Mammary epithelial cell (primary cell): ENCODE measurements at regions of chr4 and their contacts with region 1.

Region 1: DNA sequence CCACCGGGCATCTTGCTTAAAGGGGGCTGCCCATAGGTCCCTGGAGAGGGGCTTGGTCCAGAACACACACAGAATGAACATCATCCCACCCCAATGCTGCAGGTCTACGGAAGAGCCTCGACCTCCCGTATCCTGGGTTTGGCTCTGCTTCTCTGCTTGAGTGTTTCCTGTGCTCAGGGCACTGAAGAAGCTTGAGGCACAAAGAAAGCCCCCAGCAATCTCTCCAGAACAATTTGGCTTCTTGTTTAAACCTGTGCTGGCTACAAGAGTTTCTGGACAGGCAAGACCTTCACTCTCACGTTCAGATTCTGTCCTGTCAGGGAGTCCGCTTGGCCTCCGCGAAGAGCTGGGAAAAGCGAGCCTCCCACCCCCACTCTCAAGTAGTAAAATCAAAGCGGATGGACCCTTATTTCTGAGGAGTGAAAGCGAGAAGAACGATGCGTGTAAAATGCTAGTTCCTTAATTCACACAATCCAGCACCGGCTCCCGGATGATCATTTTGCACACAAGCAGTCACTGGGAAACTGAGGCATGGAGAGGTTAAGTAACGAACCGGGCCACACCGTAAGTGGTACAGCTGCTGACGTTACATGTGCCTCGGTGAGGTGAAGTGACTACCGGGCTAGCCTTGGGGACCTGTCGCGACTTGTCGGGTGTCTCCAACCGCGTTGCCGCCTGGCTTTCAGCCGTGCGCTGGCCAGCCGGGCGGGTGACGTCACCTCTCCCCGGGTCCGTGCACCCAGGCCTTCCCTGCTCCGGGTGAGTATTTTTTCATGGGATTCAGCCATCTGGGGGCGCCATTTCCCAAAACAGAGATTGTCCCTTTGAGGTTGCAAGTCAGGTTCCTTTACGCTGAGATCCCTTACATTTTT is 3.1 kb upstream of the SFRP2 start:
- DNase-seq: peak; percentile 67
- H3K4me3 ChIP-seq: peak overlapping the region in 2 of 3 experiments; percentile 32 to 35
- H3K27ac ChIP-seq: no peak overlapping the region
- H3K4me1 ChIP-seq: peaks cover 23% of the 10 kb centered on the region
- H3K27me3 ChIP-seq: peaks cover 37% of the 10 kb centered on the region
- CTCF ChIP-seq: peak; percentile 41 to 57

Region 2: GRCh38 chr4:153661211-153661822 is 130.7 kb before region 1 on chr4:
- CTCF ChIA-PET with region 1: no interaction called
- dilution Hi-C with region 1: no loop called
- in situ Hi-C with region 1: no loop called
- intact Hi-C with region 1: no loop called
- DNase-seq: peak; percentile 71
- H3K4me3 ChIP-seq: no peak overlapping the region
- H3K27ac ChIP-seq: no peak overlapping the region
- H3K4me1 ChIP-seq: peaks cover 3% of the 10 kb centered on the region
- H3K27me3 ChIP-seq: no peaks in the 10 kb centered on the region
- CTCF ChIP-seq: no peak

Region 3: GRCh38 chr4:153757407-153757806 is 34.6 kb before region 1 on chr4:
- CTCF ChIA-PET with region 1: no interaction called
- dilution Hi-C with region 1: no loop called
- in situ Hi-C with region 1: no loop called
- intact Hi-C with region 1: no loop called
- DNase-seq: peak; percentile 33
- H3K4me3 ChIP-seq: no peak overlapping the region
- H3K27ac ChIP-seq: no peak overlapping the region
- H3K4me1 ChIP-seq: peaks cover 18% of the 10 kb centered on the region
- H3K27me3 ChIP-seq: peaks cover 4% of the 10 kb centered on the region
- CTCF ChIP-seq: no peak

Region 4: GRCh38 chr4:154024097-154024694 is 232.2 kb after region 1 on chr4:
- CTCF ChIA-PET with region 1: no interaction called
- dilution Hi-C with region 1: no loop called
- in situ Hi-C with region 1: loop called in 1 of 2 experiments (anchors 10 kb)
- intact Hi-C with region 1: loop called (anchors 1 kb)
- DNase-seq: no peak
- H3K4me3 ChIP-seq: no peak overlapping the region
- H3K27ac ChIP-seq: no peak overlapping the region
- H3K4me1 ChIP-seq: no peaks in the 10 kb centered on the region
- H3K27me3 ChIP-seq: peaks cover 2% of the 10 kb centered on the region
- CTCF ChIP-seq: peak in 1 of 2 donors; percentile 22

Region 5: DNA sequence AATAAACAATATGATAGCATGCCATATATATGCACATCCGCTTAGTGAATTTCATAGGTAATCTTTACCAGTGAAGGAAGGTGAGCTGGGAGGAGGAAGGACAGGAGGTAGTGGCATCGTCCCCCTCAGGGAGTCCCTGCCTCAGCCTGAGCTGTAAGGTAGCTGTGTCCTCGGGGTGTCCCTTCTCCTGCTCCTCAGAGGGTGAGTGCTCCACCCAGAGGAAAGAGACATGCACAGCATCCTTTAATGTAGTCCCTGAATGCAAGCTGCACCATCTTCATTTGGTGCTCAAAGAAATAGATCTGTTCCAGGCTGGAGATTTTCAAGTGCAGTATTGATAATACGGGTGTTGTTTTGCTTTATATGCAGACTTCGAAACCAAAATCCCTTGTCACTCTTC is 327.3 kb after region 1 on chr4:
- CTCF ChIA-PET with region 1: no interaction called
- dilution Hi-C with region 1: no loop called
- in situ Hi-C with region 1: no loop called
- intact Hi-C with region 1: loop called (anchors 2 kb)
- DNase-seq: no peak
- H3K4me3 ChIP-seq: no peak overlapping the region
- H3K27ac ChIP-seq: no peak overlapping the region
- H3K4me1 ChIP-seq: peaks cover 7% of the 10 kb centered on the region
- H3K27me3 ChIP-seq: no peaks in the 10 kb centered on the region
- CTCF ChIP-seq: peak; percentile 25 to 50

Region 6: DNA sequence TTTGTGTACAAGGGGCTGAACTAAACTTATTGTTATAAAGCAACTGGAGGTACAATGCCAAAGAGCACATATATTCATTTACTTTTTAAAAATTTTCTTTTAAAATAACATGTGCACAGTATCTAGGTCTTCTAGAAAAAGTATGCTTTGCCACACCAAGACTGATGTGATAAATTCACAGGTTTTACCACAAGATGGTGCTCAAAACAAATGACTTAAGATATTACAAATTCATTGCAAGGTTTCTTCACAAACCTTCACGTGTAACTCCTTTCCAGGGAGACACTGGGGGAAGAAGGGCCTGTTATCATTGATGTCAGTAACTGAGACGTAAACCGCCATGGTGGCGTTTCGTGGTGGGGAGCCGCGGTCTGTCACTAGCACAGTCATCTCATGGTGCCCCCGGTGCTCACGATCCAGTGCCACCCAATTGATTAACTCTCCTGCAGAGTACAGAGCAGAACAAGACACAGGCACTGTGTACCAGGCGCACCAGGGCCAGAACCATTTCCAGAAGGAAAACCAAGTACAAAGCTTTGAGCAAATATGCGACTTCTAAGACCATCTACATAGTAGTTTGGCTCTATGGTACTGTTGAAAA is 537.4 kb after region 1 on chr4:
- CTCF ChIA-PET with region 1: no interaction called
- dilution Hi-C with region 1: no loop called
- in situ Hi-C with region 1: loop called (anchors 10 to 25 kb)
- intact Hi-C with region 1: no loop called
- DNase-seq: peak; percentile 21
- H3K4me3 ChIP-seq: no peak overlapping the region
- H3K27ac ChIP-seq: no peak overlapping the region
- H3K4me1 ChIP-seq: no peaks in the 10 kb centered on the region
- H3K27me3 ChIP-seq: no peaks in the 10 kb centered on the region
- CTCF ChIP-seq: peak; percentile 36 to 45